A673 (cell line): ENCODE measurements at regions of chr21 and their contacts with region 1.

Region 1: DNA sequence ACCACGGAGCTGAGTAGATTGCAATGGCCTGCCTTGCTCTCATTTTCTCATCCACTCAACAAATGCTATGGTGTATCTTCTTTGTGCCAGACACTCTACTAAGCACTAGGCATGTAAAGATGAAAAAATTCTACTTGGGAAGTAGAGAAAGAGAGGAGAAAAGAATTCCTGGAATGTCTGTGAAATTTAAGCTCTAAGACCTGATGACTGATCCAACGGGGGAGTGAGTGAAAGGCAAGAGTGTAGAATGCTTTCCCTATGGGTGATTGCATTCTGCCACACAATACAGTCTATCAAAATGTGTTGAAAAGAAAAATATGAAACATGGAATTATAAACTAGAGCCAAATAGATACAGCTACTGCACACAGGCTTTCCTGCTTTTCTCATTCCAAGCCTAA is 82.3 kb downstream of the CYYR1 start:
- DNase-seq: peak; percentile 78
- H3K4me3 ChIP-seq: no peak overlapping the region
- H3K27ac ChIP-seq: peak overlapping the region; percentile 90
- H3K4me1 ChIP-seq: peaks cover 62% of the 10 kb centered on the region
- H3K27me3 ChIP-seq: no peaks in the 10 kb centered on the region
- CTCF ChIP-seq: no peak

Region 2: DNA sequence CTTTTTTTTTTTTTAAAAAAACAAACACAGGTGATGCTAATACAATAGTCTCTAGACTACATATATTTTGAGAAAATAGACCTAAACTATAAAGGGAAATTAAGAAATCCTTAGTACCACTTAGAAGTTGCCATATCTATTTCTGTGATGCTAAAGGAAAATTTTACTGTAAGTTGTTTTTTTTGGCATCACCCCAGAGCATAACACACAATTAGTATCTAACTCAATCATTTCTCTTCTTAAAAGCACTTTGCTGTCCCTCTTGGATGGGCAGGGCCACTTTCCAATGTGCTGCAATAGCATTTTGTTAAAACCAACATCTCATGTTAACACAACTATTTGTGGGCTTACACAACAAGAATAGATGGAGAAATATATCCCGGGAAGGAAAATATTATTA is 664.1 kb before region 1 on chr21:
- CTCF ChIA-PET with region 1: no interaction called
- POLR2A ChIA-PET with region 1: no interaction called
- intact Hi-C with region 1: loop called (anchors 2 kb)
- DNase-seq: no peak
- H3K4me3 ChIP-seq: no peak overlapping the region
- H3K27ac ChIP-seq: no peak overlapping the region
- H3K4me1 ChIP-seq: no peaks in the 10 kb centered on the region
- H3K27me3 ChIP-seq: no peaks in the 10 kb centered on the region
- CTCF ChIP-seq: no peak

Region 3: DNA sequence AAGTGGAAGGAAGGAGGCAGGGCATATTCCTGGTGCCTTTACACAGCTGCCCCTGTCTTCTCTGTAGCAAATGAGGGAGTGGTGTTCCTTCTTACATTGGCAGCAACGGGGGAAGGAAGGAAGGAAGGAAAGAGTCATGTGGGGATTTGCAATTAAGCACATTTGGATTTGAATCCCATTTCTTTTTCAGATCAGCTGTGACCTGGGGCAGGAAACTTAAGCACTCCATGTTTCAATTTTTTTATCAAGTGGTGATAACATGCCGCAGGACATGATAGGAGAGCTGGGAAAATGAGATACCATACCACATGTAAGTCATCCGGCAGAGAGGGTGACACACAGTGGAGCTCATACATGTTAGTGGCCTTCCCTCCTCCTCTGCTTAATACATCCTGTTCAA is 507.0 kb before region 1 on chr21:
- CTCF ChIA-PET with region 1: no interaction called
- POLR2A ChIA-PET with region 1: no interaction called
- intact Hi-C with region 1: loop called (anchors 5 kb)
- DNase-seq: peak; percentile 94
- H3K4me3 ChIP-seq: peak overlapping the region; percentile 18
- H3K27ac ChIP-seq: peak overlapping the region; percentile 69
- H3K4me1 ChIP-seq: peaks cover 50% of the 10 kb centered on the region
- H3K27me3 ChIP-seq: no peaks in the 10 kb centered on the region
- CTCF ChIP-seq: no peak

Region 4: DNA sequence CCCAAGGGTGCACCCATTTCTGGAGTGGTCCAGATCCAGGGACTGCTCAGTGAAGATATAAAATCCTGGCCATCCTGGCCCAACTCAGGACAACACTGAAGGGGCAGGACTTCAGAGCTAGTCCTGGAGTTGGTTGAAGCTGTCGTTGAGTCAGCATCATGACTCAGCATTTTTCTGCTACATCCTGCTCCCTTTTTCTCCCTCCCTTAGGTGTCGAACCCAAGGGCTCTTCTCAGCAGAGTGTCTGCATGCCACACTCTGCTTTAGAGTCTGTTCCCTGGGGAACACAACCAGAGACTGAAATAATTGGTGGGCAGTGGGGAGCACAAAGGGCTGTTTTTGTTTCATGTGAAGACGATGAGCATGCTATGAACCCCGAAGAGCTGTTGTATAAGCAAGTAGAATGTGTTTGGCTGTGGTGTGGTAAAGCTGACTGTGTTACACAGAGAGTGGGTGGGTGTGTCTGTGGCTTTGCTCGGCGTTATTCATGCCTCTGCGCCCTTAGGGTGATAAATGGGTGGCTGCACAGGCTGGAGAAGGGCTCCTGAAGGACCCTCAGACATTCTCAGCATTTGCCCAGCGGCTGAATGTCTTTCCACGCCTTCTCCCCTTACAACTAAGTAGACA is 84.9 kb before region 1 on chr21:
- CTCF ChIA-PET with region 1: no interaction called
- POLR2A ChIA-PET with region 1: no interaction called
- intact Hi-C with region 1: loop called (anchors 5 kb)
- DNase-seq: peak; percentile 59
- H3K4me3 ChIP-seq: no peak overlapping the region
- H3K27ac ChIP-seq: peak overlapping the region; percentile 57
- H3K4me1 ChIP-seq: peaks cover 36% of the 10 kb centered on the region
- H3K27me3 ChIP-seq: no peaks in the 10 kb centered on the region
- CTCF ChIP-seq: no peak

Region 5: DNA sequence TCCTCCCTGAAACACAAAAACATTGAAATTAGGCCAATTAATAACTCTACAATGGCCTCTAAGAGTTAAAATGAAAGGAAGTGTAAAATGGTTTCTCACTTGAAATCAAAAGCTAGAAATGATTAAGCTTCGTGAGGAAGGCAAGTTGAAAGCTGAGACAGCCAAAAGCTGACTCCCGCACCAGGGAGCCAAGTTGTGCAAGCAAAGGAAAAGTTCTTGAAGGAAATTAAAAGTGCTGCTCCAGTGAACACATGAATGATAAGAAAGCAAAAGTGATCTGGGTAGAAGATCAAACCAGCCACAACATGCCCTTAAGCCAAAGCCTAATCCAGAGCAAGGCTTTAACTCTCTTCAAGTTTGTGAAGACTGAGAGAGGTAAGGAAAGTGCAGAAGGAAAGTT is 59.6 kb after region 1 on chr21:
- CTCF ChIA-PET with region 1: no interaction called
- POLR2A ChIA-PET with region 1: interaction called, 3 read pairs
- intact Hi-C with region 1: loop called (anchors 5 kb)
- DNase-seq: peak; percentile 90
- H3K4me3 ChIP-seq: peak overlapping the region; percentile 15
- H3K27ac ChIP-seq: peak overlapping the region; percentile 83
- H3K4me1 ChIP-seq: peaks cover 57% of the 10 kb centered on the region
- H3K27me3 ChIP-seq: no peaks in the 10 kb centered on the region
- CTCF ChIP-seq: no peak

Region 6: DNA sequence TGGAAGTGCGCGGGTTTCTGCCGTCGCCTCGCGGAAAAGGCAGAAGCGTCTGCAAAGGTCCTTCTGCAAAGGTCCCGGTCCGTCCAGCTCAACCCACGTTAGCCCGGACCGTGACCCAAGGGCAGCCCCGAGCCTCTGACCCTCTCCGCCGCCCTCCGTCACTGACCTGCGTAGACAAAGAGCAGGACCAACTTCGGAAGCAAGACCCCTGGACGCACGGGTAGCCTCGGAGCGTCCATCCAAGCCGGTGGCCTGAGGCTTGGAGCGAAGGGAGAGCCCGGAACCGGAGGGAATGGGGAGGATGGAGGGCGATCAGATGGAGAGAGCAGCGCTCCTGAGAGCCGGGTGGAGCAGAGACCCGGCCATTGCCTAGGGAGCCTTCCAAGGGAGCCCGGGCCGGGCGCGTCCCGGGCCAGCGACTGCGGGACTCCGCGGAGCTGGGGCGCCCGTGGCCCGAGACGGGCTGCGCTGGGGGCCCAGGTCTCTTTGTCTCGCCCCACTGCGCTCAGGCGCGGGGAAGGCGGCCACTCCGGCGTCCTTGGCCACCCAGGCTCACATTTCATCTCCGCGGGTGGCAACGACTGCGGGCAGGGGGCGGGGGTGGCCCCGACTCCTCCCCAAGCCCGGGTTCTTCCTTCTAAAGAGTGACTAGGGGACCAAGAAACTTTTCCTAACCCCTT is 82.1 kb after region 1 on chr21 and contains the start of gene CYYR1:
- CTCF ChIA-PET with region 1: no interaction called
- POLR2A ChIA-PET with region 1: no interaction called
- intact Hi-C with region 1: loop called (anchors 2 kb)
- DNase-seq: peak; percentile 88
- H3K4me3 ChIP-seq: peak within 1 kb of the TSS; percentile 76
- H3K27ac ChIP-seq: peak within 1 kb of the TSS; percentile 96
- H3K4me1 ChIP-seq: peaks cover 15% of the 10 kb centered on the region
- H3K27me3 ChIP-seq: no peaks in the 10 kb centered on the region
- CTCF ChIP-seq: no peak
- total RNA-seq, gene CYYR1: 89.1 and 96.4 TPM in 2 replicates

Region 7: DNA sequence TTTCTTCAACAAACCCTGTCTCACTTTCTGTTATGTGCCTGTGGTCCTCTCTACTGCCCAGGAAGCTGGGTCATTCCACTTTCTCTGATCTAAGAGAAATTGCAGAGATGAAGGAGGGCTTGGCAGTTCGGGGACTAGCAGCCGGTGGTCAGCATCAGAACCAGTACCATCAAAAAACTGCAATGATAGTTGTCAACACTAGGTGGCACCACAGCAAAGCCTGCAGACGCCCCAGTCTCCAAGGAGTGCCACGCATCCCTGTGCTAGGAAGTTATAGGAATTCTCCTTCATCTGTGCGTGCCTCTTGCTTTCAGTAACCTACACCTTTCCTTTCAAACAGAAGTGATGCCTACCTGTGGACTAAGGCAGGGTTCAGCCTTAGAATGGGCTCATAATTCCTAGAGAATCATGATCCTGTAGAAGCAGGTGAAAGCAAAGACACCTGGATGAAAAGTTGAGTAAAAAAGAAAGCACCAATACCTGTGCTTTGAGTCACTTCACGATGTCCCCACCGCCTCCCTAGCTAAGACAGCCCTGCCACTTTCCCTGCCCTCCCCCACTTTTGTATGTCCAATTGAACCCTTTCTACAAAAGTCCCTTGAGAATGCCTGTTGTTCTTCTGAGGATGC is 225.2 kb after region 1 on chr21:
- CTCF ChIA-PET with region 1: no interaction called
- POLR2A ChIA-PET with region 1: no interaction called
- intact Hi-C with region 1: loop called (anchors 5 kb)
- DNase-seq: peak; percentile 73
- H3K4me3 ChIP-seq: no peak overlapping the region
- H3K27ac ChIP-seq: no peak overlapping the region
- H3K4me1 ChIP-seq: peaks cover 13% of the 10 kb centered on the region
- H3K27me3 ChIP-seq: no peaks in the 10 kb centered on the region
- CTCF ChIP-seq: peak; percentile 88